Posterior vena cava (tissue), 2 donors: ENCODE measurements at regions of chr1 and their contacts with region 1.

Region 1: DNA sequence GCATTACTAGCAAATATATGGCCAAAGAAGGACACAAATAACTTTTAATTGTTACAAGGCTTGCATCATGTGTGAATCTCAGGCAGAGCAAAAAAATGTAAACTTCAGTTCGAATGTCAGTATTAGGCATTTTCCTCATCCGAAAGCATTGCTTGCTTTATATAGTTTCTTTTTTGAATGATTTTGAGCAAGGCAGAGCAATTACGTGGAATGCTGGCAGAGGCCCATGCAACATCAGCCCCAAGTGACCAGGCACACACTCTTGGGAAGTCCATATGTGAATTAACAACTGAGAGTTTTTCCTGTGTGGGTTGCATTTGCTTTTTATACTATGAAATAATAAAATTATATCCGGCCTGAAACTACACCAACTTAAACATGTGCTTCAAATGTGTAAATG is 274.8 kb downstream of the PTPRC start:
- DNase-seq: no peak

Region 2: DNA sequence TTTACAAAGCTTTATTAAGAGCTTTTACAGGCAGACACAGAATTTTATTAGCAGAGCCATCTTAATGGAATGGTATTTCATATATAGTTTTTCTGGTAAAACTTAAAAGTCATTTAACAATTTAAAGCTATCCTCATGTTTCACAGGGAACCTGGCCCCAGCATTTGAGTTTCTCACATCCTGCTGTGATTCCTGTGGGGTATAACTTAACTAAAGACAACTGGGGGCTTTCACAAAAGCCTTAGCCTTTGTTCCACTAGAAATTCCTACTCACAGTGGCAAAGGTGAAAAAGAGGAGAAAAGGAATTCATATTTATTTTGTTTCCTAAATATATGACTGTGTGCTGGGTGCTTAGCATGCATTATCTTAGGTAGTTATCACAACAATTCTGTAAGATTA is 1372.3 kb before region 1 on chr1:
- intact Hi-C with region 1: no loop called
- DNase-seq: no peak

Region 3: GRCh38 chr1:198798923-198799386 is 114.7 kb before region 1 on chr1:
- intact Hi-C with region 1: no loop called
- DNase-seq: no peak

Region 4: GRCh38 chr1:198959676-198960075 is 46.0 kb after region 1 on chr1:
- intact Hi-C with region 1: loop called in 1 of 2 experiments (anchors 2 kb)
- DNase-seq: no peak

Region 5: DNA sequence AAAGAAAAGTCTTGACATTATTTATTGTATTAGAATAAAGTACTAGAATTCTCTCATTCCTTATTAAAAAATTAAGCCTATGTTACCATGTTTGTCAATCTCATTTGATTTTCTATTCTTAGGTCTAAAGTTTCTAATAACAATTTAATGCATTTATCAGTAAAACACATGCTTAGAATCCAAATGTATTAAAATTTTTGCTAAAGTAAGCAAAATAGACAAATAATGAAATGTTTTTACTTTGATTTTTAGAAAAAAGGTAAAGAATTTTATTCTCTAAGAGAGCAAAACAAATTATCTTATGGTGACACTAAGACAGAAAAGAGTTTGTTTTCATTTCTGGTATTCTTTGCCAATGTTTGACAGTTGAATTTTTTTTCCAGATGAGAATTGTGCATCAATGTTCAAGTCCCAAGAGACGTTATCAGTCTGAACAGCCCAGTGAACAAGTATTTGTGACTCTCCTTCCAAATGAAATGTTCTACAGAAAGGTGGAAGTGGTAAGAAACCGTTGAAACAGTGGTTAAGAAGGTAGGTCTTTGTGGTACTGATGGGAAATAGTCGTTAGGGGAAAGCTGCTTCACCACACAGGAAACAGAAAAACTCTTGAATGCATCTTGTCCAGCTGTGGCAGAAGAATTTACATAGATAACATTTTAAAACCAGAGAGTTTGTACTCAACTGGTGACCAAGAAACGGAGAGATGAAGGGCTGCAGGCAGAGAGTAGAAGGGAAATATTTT is 127.7 kb after region 1 on chr1:
- intact Hi-C with region 1: no loop called
- DNase-seq: no peak

Region 6: GRCh38 chr1:199067483-199067882 is 153.8 kb after region 1 on chr1:
- intact Hi-C with region 1: no loop called
- DNase-seq: no peak